ENCODE measurements at regions of chr2 and their contacts with region 1.

Region 1: DNA sequence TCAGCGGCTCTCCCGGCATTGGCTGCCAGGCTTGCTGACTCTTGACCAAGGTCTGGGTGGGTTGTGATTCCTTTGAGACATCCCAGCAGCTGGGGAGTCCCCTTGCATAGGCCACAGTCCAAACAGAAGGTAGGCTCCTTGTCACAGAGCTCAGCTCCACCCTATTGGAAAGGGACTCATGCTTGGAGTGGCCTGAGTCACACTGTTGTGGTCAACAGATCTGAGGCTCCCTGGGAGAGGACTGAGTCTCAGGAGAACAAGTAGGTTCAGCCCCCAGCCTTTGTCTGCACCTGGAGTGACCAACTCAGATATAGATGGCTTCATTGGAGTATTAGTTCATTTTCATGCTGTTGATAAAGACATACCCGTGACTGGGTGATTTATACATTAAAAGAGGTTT is 32.1 kb upstream of the SH3BP4 start:
- DNase-seq: peak; percentile 66
- ATAC-seq: peak; percentile 64; the same call in 1 of the 2 replicates
- H3K4me3 ChIP-seq: no peak overlapping the region
- H3K27ac ChIP-seq: no peak overlapping the region
- H3K4me1 ChIP-seq: peaks cover 13% of the 10 kb centered on the region
- H3K27me3 ChIP-seq: no peaks in the 10 kb centered on the region
- CTCF ChIP-seq: no peak

Region 2: DNA sequence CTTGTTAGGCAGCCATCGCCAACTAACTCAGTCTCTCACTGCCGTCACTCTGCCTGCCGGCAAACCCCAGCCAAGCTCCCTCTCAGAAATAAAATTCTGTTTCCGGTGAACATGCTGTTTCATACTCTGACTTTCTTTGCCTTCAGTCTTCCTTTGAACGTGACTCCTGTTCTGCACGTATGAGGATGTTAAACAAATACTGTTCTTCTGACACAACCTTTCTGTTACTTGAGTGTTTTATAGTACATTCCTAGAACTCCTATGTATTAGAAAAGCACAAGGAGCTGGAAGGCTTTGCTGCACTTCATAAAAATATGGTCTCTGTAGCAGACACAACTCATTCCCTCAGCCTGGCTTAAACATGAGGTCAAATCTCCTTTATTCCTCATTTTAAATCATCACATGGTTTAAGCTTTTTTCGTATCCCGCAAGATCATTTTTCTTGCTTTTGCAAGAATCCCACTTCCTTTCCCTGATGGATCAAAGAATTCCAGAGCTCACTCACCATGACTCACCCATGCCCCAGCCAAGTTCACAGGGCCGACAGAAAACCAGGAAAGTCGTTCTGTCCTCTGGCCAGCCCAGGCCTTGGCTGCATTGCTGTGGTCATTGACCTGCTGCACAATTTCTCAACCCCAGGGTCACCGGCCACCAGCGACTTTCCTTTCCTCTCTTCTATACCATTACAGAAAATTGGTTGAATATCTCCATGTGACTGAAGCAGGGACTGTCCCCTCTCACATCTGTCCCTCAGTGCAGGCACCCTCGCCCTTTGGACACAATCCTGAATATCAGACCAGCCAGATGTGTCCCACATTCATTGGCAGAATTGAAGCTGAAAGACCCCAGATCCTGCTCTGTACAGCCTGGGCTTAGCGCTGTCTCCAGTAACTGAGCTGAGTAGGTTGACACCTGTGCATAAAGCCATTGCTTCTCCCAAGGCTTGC is 239.7 kb before region 1 on chr2:
- CTCF ChIA-PET with region 1: no interaction called
- POLR2A ChIA-PET with region 1: interaction called, 13 read pairs
- intact Hi-C with region 1: no loop called
- DNase-seq: peak; percentile 89
- ATAC-seq: peak; percentile 83
- H3K4me3 ChIP-seq: peak overlapping the region; percentile 54; the same call in 1 of the 2 replicates
- H3K27ac ChIP-seq: peak overlapping the region; percentile 89
- H3K4me1 ChIP-seq: peaks cover 58% of the 10 kb centered on the region
- H3K27me3 ChIP-seq: no peaks in the 10 kb centered on the region
- CTCF ChIP-seq: no peak

Region 3: GRCh38 chr2:234873828-234874173 is 45.9 kb before region 1 on chr2:
- CTCF ChIA-PET with region 1: no interaction called
- POLR2A ChIA-PET with region 1: no interaction called
- intact Hi-C with region 1: no loop called
- DNase-seq: no peak
- ATAC-seq: no peak
- H3K4me3 ChIP-seq: no peak overlapping the region
- H3K27ac ChIP-seq: no peak overlapping the region
- H3K4me1 ChIP-seq: no peaks in the 10 kb centered on the region
- H3K27me3 ChIP-seq: no peaks in the 10 kb centered on the region
- CTCF ChIP-seq: no peak

Region 4: DNA sequence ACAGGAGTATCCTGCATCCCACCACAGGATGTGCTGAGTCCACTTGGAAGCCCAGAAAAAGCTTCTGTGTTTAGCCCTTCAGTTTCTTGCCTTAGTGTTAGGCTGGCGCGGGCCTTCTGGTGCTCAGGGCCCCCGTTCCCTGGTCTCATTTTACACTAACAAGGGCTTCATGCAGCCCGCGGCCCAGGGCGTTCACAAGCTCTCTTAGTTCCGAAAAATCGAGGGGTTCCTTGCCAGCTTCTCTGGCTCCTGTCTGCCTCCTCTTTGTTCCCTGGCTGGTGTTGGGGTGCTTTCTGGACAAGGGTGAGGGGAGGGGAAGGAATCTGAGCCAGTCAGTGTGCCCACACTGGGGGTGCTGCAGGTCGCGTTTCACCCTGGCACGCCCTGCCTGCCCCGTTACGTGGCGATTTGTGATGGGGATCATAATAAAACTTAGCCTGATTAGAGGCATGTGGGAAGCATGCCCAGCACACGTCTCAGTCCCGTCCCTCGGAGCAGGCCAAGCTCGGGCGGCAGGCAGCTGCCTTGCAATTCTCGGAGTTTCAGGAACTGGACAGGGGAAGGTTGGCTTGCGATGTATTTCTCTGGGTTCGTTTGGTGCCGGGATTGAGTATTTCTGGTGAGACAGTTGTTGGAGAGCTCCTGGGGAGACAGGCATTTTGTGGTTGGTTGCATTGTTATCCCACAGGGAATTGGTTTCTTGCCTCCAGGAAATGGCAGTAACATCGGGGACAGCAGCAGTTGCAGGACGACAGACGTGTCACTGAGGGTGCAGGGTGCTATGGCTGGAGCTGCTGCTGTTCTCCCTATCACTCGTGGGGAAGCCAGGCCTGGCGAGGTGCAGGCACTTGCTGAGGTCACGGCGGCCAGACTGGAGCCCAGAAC is 55.0 kb after region 1 on chr2:
- CTCF ChIA-PET with region 1: no interaction called
- POLR2A ChIA-PET with region 1: no interaction called
- intact Hi-C with region 1: no loop called
- DNase-seq: no peak
- ATAC-seq: no peak
- H3K4me3 ChIP-seq: no peak overlapping the region
- H3K27ac ChIP-seq: no peak overlapping the region
- H3K4me1 ChIP-seq: peaks cover 42% of the 10 kb centered on the region
- H3K27me3 ChIP-seq: no peaks in the 10 kb centered on the region
- CTCF ChIP-seq: no peak

Region 5: GRCh38 chr2:234989183-234989701 is 69.5 kb after region 1 on chr2:
- CTCF ChIA-PET with region 1: no interaction called
- POLR2A ChIA-PET with region 1: no interaction called
- intact Hi-C with region 1: no loop called
- DNase-seq: peak; percentile 96
- ATAC-seq: peak; percentile 90
- H3K4me3 ChIP-seq: peak overlapping the region; percentile 9; the same call in 1 of the 2 replicates
- H3K27ac ChIP-seq: peak overlapping the region; percentile 76
- H3K4me1 ChIP-seq: peaks cover 21% of the 10 kb centered on the region
- H3K27me3 ChIP-seq: no peaks in the 10 kb centered on the region
- CTCF ChIP-seq: no peak

Measured in PC-3 (cell line).